Right ventricle myocardium inferior (tissue), 1 donor: ENCODE measurements at regions of chr2 and their contacts with region 1.

Region 1: DNA sequence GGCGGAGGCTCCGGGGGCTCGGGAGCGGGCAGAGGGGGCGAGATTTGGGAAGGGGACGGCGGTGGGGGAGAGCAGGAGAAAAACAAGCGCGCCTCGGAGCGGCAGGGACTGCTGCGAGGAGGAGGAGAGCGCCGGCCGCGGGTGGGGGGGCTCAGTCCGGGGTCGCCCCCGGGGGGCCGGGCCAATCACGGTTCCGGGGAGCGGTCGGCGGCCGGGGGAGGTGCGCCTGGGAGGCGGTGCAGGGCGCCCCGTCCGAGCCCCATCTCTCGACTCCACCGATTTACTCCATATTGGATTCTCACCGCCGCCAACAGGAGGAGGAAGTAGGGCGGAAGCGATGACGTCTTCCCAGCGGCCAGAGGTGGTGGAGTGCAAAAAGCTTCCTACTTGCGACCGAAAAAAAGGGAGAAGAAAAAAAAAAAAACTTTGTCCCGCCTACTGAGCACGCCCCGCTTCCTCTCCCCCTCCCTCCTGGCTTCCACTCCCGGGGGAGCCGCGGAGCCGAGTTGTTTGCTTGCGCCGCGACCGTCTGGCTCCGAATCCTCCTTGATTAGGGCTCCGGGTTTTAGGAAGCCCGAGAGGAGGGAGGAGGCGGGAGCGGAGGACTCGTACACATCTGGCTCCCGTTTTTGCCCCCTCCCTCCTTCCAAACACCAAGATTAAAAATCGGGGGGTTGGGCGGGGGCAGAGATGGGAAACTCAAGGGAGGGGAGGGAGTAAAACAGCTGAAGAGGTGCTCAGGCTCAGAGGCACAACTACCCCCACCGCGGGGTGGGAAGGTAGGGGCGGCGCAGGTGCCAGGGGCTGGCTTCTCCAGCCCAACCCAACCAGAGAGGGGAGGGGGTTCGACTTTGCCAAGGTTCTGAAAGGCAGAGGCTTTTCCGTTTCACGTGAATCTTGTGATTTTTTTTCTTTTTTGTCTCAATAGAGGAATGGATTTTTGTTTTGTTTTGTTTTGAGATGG is at the start of gene SPRED2:
- DNase-seq: peak; percentile 97
- ATAC-seq: peak; percentile 74
- total RNA-seq, gene SPRED2: 14.0 TPM

Region 2: GRCh38 chr2:64311948-64312621 is 1120.4 kb before region 1 on chr2:
- intact Hi-C with region 1: no loop called
- DNase-seq: peak; percentile 86
- ATAC-seq: peak; percentile 93

Region 3: DNA sequence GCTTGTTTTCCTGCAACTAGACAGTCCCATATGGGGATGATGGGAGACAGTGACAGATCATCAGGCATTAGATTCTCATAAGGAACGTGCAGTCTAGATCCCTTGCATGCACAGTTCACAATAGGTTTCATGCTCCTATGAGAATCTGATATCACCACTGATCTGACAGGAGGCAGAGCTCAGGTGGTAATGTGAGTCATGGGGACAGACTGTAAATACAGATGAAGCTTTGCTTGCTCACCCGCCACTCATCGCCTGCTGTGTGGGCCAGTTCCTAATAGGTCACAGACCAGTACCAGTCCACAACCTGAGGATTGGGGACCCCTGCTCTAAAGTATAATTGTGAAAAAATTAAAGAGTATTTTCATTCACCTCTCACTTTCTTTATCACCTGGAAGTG is 279.0 kb before region 1 on chr2:
- intact Hi-C with region 1: no loop called
- DNase-seq: no peak
- ATAC-seq: no peak

Region 4: GRCh38 chr2:65227425-65228262 is 204.9 kb before region 1 on chr2 and contains the start of gene ACTR2:
- intact Hi-C with region 1: loop called (anchors 1 kb)
- DNase-seq: peak; percentile 99
- ATAC-seq: peak; percentile 99
- total RNA-seq, gene ACTR2: 108 TPM

Region 5: GRCh38 chr2:65309708-65310107 is 122.8 kb before region 1 on chr2:
- intact Hi-C with region 1: loop called (anchors 2 kb)
- DNase-seq: no peak
- ATAC-seq: peak; percentile 15

Region 6: GRCh38 chr2:65389476-65389875 is 43.0 kb before region 1 on chr2:
- intact Hi-C with region 1: no loop called
- DNase-seq: no peak
- ATAC-seq: no peak

Region 7: DNA sequence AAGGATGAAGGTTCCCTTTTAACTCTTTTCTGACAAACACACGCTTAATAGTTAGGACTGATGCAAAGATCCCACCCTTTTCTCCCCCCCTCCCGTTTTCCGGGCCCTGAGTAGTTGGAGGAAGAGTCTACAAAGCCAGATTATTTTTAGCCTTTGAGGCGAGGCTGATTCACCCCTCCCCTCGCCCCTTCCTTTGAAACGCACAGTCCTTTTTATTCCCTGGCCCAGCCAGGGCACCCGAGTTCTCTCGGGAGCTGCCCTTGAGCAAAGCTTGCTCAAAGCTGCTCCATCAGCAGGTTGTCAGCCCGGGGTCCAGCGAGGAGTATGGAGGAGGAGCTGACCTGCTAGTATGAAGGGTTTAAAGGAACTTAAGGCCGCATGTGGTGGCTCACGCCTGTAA is 47.0 kb after region 1 on chr2:
- intact Hi-C with region 1: loop called (anchors 2 kb)
- DNase-seq: no peak
- ATAC-seq: peak; percentile 26